GM13976 (cell line): ENCODE measurements at regions of chr6 and their contacts with region 1.

Region 1: DNA sequence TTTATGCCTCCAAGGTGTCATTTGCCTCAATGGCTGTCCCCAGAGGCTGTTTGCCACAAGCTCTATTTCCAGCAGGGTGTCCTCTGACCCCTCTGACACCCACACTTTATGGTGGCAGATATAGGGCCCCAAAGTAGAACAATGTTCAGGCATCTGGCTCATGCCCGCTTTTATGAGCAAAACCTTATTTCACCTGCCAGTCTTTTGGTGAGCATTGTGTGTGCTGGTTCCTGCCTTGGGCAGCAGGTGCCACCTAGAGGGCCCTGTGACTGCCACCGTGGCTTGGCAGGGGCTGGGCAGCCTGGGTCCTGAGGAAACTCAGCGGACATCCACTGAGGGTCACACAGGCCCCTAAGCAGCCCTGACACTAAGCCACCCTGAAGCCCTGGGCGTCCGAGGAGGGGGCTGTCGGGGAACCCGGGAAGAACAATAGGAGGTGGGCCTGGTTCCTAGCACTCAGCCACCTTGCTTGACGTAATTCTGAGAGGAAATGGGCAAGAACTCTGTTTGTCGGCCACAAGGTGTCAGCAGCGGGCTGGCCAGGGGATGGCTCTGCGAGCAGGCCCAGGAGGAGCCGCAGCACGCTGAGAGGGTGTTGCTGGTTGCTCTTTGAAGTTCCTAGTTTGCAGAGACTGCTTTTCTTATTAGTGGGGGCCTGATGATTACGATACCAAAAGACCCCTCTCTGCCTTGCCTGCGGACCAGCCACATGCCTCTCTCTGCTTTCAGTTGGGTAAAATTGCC is 148.9 kb downstream of the SCML4 start:
- DNase-seq: peak; percentile 88
- CTCF ChIP-seq: peak; percentile 92

Region 2: DNA sequence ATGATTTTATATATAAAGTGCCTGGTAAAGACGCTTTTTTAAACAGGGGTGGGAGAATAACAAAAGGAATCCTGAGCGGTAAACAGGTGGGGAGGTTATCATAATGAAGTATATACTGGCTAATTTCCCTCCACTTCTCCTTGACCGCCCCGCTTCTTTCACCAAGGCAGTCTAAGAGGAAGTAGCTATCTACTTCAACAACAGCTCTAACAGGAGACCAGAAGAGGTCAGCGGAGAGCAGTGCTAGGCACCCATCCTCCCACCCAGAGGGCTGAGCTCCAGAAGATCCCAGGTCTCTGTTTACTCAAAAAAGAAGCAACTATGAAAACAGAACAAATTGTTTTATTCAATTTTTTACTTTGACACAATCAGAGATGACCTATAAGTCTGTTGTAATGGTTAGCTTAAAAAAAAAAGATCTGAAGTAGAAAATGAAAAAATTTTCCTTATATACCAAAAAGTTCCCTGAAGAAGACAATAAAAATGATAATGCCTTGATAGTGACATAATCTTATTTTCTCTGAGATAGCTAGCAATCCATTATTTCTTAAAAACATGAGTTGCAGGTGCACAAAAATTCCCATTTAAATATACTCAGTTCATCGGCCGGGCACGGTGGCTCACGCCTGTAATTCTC is 356.9 kb before region 1 on chr6:
- in situ Hi-C with region 1: loop called (anchors 25 kb)
- DNase-seq: peak; percentile 53
- CTCF ChIP-seq: peak; percentile 71

Region 3: GRCh38 chr6:108578595-108579327 is 903.6 kb after region 1 on chr6:
- in situ Hi-C with region 1: no loop called
- DNase-seq: no peak
- CTCF ChIP-seq: no peak